Psoas muscle (tissue), 8 donors: ENCODE measurements at regions of chr6 and their contacts with region 1.

Region 1: DNA sequence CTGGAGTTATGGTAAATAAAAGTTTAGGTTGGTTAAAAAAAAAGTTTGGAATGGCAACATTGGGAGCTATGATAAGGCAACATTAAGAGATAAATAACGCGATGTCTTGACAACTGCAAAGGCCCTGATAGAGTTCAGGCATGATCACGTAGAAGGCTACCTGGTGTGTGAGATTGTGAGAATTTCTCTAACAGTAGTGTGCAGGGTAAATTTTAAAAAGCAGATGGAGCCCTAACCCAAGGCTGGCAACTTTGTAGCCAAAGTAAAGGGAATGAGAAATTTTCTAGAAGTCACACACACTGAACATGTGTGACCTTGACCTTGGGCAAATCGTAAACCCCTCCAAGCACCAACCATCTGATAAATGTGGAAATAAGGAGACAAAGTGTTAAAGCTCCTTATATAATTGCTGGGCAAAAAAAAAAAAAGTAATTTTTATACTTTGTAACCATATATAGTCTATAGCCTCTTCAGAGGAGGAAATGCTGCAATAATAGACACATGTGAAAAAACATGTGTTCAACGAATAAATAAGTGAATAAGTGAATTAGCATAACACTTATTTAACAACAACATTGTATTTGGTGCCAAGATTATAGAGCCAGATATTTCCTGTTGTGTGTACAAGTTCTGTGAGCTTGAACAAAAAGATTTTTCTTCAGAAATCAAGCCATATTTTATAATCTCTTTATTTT is 18.2 kb downstream of the KCNQ5 start:
- DNase-seq: no peak
- ATAC-seq: peak in 2 of 4 donors; percentile 13 to 36
- H3K4me3 ChIP-seq: no peak overlapping the region
- H3K27ac ChIP-seq: no peak overlapping the region
- H3K4me1 ChIP-seq: peaks cover 31% of the 10 kb centered on the region
- H3K27me3 ChIP-seq: no peaks in the 10 kb centered on the region
- CTCF ChIP-seq: no peak

Region 2: GRCh38 chr6:72657407-72658197 is 17.5 kb after region 1 on chr6:
- intact Hi-C with region 1: loop called in 1 of 2 experiments (anchors 2 kb)
- DNase-seq: no peak
- ATAC-seq: no peak
- H3K4me3 ChIP-seq: no peak overlapping the region
- H3K27ac ChIP-seq: no peak overlapping the region
- H3K4me1 ChIP-seq: peaks cover 18% of the 10 kb centered on the region
- H3K27me3 ChIP-seq: no peaks in the 10 kb centered on the region
- CTCF ChIP-seq: no peak

Region 3: DNA sequence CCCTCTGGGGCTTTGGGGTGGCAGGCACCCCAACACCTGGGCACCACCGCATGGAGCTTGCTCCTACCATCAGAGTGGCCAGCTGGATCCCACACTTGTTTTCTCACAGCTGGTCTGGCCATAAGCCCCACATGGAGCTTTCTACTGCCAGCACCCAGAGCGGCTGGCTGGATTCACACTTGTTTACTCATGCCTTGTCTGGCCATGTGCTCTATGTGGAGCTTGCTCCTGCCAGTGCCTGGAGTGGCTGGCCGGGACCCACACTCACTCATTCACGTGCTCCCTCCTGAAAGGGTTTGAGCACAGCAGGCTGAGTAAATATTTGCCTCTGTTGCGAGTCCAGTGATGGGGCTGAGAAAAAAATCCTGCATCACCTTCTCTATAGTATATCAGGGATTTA is 1542.9 kb after region 1 on chr6:
- intact Hi-C with region 1: no loop called
- DNase-seq: peak; percentile 26 to 55
- ATAC-seq: no peak
- H3K4me3 ChIP-seq: no peak overlapping the region
- H3K27ac ChIP-seq: no peak overlapping the region
- H3K4me1 ChIP-seq: no peaks in the 10 kb centered on the region
- H3K27me3 ChIP-seq: no peaks in the 10 kb centered on the region
- CTCF ChIP-seq: no peak